Posterior cingulate gyrus (tissue), 11 donors: ENCODE measurements at regions of chr1 and their contacts with region 1.

Region 1: GRCh38 chr1:100265931-100266740 is at the start of gene RTCA:
- DNase-seq: peak; percentile 93 to 99 (median 96)

Region 2: GRCh38 chr1:99992760-99993467 is 273.2 kb before region 1 on chr1:
- intact Hi-C with region 1: no loop called
- DNase-seq: no peak

Region 3: DNA sequence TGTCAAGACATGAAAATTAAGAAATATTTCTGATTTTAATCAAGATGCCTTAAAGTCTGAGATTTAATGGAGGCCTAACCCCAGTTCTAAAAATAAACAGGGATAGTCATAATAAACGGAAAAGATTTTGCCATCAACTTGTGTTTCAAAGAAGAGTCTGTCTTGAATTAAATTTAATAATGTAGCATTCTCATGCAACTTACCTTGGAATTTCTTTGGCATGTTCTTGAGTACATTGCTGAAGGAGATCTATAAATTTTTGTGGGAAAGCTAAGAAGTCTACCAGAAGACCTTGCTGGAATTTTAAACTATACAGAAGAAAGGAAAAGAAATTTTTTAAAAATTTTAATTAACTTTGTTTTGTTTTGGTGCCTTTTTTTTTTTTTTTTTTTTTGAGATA is 144.0 kb before region 1 on chr1:
- intact Hi-C with region 1: no loop called
- DNase-seq: no peak

Region 4: DNA sequence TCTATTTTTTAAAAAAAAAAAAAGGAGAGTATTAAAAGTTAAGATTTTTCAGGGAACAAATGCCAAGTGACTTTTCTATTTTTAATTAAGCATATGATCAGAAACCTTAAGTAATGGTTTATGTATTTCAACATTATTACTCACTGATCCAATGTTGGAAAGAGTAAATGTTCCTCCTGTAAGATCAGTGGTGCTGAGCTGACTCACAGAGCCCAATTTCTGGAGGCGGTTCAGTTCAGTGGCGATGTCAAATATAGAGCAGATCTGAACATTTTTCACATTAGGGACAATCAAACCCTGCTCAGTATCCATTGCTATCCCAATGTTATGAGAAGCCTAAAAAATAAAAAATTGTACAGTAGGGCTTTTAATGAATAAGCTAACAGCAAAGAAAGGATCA is 59.8 kb before region 1 on chr1:
- intact Hi-C with region 1: no loop called
- DNase-seq: no peak

Region 5: GRCh38 chr1:100249537-100250257 is 16.4 kb before region 1 on chr1 and contains the start of gene DBT:
- intact Hi-C with region 1: loop called (anchors 2 kb)
- DNase-seq: peak; percentile 95 to 99 (median 97)